HCT116 (cell line): ENCODE measurements at regions of chr11 and their contacts with region 1.

Region 1: DNA sequence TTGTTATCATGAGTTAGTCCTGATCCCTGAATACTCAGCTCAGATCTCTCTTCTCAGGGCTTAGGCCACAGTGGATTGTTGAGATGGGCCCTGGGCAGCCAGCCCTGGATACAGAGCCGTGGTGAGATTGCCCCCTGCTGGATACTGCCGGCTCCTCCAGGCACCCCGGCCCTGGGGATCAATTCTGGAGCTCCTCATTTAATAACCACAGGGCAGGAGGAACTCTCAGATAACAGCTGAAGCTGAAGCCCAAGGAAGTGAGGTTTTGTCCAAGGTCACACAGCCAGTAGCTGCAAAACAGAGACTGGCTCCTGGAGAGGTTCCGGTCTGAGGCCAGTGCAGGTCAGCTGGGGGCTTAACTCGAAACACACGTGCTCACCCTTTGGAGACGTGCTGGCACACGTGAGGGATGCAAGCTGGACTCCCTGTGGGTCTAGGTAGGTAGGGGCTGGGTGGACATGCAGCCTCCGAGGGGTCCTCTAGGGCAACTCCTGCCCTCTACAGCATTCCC is 16.0 kb downstream of the USH1C start:
- DNase-seq: no peak
- ATAC-seq: peak; percentile 99
- H3K4me3 ChIP-seq: no peak overlapping the region
- H3K27ac ChIP-seq: no peak overlapping the region
- H3K4me1 ChIP-seq: no peaks in the 10 kb centered on the region
- H3K27me3 ChIP-seq: no peaks in the 10 kb centered on the region
- CTCF ChIP-seq: peak; percentile 79 to 95 (median 92)
- POLR2A ChIP-seq: no peak
- RAD21 ChIP-seq: peak; percentile 80

Region 2: DNA sequence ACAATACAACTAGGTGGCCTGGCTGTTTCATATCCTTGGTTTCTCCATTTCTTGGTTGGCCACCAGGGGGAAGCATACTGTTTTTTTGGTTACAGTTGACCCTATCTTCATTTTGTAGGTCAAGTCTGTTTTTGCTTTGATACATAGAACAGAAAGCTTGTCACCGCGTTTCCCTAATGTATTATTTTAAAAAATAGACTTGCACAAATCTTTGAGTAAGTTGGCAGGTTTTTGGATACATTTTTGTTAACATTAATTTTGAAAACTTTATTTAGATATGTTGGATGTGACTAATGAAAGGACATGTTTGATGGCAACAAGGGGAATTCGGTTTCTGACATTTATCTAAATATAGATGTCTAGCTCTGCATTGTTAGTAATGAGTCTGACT is 173.6 kb before region 1 on chr11:
- CTCF ChIA-PET with region 1: interaction called, 15 read pairs
- POLR2A ChIA-PET with region 1: no interaction called
- RAD21 ChIA-PET with region 1: no interaction called
- intact Hi-C with region 1: no loop called
- DNase-seq: peak; percentile 75
- ATAC-seq: peak; percentile 55
- H3K4me3 ChIP-seq: peak overlapping the region; percentile 60 to 71
- H3K27ac ChIP-seq: no peak overlapping the region
- H3K4me1 ChIP-seq: peaks cover 6 to 23% of the 10 kb centered on the region in 2 experiments; a peak in 3 of 4 replicates
- H3K27me3 ChIP-seq: no peaks in the 10 kb centered on the region
- CTCF ChIP-seq: peak; percentile 64 to 73 (median 71); a peak in 5 of 6 replicates
- POLR2A ChIP-seq: no peak
- RAD21 ChIP-seq: peak; percentile 55

Region 3: DNA sequence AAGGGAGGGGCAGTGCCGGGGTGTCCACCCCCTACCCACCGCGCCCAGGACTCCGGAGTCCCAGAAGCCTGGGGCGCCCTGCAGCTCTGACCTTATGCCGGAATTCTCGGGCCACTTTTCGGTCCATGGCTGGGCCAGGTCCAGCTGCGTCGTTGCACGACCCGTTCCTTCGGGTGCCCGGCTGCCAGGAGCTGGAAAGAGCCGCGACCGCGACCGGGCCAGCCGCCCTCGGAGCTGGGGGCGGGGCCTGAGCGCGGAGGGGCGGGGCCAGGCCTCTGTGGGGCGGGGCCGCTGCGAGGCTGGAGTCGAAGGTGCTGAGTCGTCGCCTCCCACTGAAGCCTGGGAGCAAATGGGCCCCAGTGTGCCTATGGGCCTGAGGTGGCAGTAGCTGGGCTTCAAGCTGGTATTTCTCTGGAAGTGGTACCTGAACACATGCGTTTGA is 16.0 kb after region 1 on chr11 and contains the start of gene USH1C:
- CTCF ChIA-PET with region 1: interaction called, 15 read pairs
- POLR2A ChIA-PET with region 1: no interaction called
- RAD21 ChIA-PET with region 1: interaction called in 1 of 2 experiments, 4 read pairs
- intact Hi-C with region 1: no loop called
- DNase-seq: peak; percentile 29
- ATAC-seq: peak; percentile 95
- H3K4me3 ChIP-seq: peak within 1 kb of the TSS; percentile 65 to 88
- H3K27ac ChIP-seq: peak within 1 kb of the TSS; percentile 61; the same call in 1 of the 2 replicates
- H3K4me1 ChIP-seq: peaks cover 4 to 22% of the 10 kb centered on the region in 2 experiments; a peak in 3 of 4 replicates
- H3K27me3 ChIP-seq: no peaks in the 10 kb centered on the region
- CTCF ChIP-seq: no peak
- POLR2A ChIP-seq: no peak
- RAD21 ChIP-seq: no peak
- total RNA-seq, gene USH1C: 13.4 TPM

Region 4: DNA sequence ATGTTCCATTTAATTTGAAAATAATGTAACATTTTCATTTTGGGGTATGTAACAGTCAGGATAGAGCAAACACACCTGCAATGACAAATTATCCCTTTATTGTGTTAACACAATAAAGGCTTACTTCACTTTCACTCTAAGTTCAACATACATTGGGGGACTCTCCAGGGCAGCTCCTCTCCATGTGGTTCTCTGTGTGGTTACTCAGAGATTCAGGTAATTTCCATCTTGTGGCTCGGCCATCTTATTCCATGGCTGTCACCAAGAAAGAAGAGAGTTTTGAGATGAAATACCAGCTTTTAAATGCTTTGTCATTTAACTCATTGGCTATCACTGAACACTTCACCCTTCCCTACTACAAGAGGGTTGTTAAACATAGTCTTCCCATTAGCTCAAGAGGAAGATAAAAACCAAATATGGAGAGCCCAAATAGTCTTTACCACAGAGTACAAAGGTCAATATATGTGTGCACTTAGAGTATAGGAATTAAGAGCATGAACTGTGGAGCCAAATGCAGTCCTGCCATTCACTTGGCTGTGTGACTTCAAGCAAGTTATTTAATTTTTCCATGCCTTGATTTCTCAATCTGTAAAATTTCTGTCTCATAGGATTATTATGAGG is 528.4 kb after region 1 on chr11:
- CTCF ChIA-PET with region 1: no interaction called
- POLR2A ChIA-PET with region 1: no interaction called
- RAD21 ChIA-PET with region 1: no interaction called
- intact Hi-C with region 1: no loop called
- DNase-seq: no peak
- ATAC-seq: no peak
- H3K4me3 ChIP-seq: no peak overlapping the region
- H3K27ac ChIP-seq: no peak overlapping the region
- H3K4me1 ChIP-seq: no peaks in the 10 kb centered on the region
- H3K27me3 ChIP-seq: no peaks in the 10 kb centered on the region
- CTCF ChIP-seq: no peak
- POLR2A ChIP-seq: no peak
- RAD21 ChIP-seq: no peak